ENCODE measurements at regions of chr12 and their contacts with region 1.

Region 1: DNA sequence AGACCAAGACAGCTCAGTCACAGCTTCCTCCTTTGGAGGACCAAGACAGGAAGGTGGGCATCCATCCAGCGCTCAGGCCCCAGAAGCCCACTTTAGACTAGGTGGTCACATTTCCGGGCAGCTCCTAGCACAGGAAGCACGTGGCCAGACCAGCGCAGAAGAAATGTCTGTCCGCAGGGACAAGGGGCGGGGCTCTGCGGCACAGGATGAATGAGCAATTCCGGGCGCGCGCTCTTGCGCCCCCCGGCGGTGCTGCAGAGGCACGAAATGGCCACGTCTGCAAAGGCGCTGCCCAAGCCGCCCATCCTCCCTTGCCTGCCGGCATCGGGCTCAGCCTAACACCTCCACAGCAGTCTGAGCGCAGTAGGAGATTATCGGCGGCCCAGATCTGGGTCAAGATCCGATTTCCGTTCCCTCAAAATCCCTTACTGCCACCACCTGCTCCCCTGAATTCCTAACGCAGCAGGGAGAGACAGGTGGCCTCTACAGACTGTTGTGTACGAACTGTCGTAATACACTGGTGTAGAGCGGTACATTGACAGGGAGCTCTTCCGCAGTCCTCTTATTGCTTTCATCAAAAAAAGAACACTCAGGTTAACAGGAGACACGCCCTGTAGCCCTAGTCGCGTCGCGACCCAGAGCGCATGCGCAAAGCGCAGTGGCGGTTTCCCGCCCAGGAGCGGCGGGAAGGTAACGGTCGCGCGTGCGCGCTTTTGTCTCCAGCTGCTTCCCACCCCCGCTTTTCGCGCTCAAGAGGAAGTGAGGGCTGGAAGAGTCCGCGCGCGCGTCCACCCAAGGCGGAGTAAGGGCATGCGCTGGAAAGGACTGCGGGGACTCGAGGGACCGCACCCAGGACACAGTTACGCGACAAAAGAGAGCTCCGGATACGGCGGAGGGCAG is 794 bp downstream of the TUBA1B start:
- DNase-seq: peak; percentile 98
- H3K4me3 ChIP-seq: peak overlapping the region; percentile 79 to 100 (median 99)
- H3K27ac ChIP-seq: peak overlapping the region; percentile 99 to 100 (median 100)
- H3K4me1 ChIP-seq: peaks cover 20 to 42% (median 38%) of the 10 kb centered on the region in 4 donors
- H3K27me3 ChIP-seq: no peaks in the 10 kb centered on the region
- CTCF ChIP-seq: peak; percentile 89 to 94 (median 92)
- EP300 ChIP-seq: no peak
- POLR2A ChIP-seq: peak; percentile 11

Region 2: GRCh38 chr12:49060237-49061156 is 69.9 kb before region 1 on chr12 and contains the start of gene KMT2D:
- intact Hi-C with region 1: loop called (anchors 5 kb)
- DNase-seq: peak; percentile 96
- H3K4me3 ChIP-seq: peak within 1 kb of the TSS; percentile 77 to 100 (median 98)
- H3K27ac ChIP-seq: peak within 1 kb of the TSS; percentile 96 to 98 (median 96)
- H3K4me1 ChIP-seq: peaks cover 34 to 58% (median 51%) of the 10 kb centered on the region in 4 donors
- H3K27me3 ChIP-seq: no peaks in the 10 kb centered on the region
- CTCF ChIP-seq: peak in 2 of 3 experiments; percentile 40 to 43
- EP300 ChIP-seq: no peak
- POLR2A ChIP-seq: peak; percentile 44
- total RNA-seq, gene KMT2D: 47.2 to 85.2 (median 76.2) TPM

Region 3: GRCh38 chr12:49188914-49189367 is 58.5 kb after region 1 on chr12 and contains the start of gene TUBA1A:
- intact Hi-C with region 1: loop called (anchors 2 kb)
- DNase-seq: peak; percentile 99
- H3K4me3 ChIP-seq: peak within 1 kb of the TSS; percentile 78 to 96 (median 91)
- H3K27ac ChIP-seq: peak within 1 kb of the TSS; percentile 95 to 100 (median 98)
- H3K4me1 ChIP-seq: peaks cover 16 to 42% (median 34%) of the 10 kb centered on the region in 4 donors
- H3K27me3 ChIP-seq: no peaks in the 10 kb centered on the region
- CTCF ChIP-seq: no peak
- EP300 ChIP-seq: no peak
- POLR2A ChIP-seq: peak; percentile 83
- total RNA-seq, gene TUBA1A: 534 to 1,110 (median 887) TPM

Region 4: DNA sequence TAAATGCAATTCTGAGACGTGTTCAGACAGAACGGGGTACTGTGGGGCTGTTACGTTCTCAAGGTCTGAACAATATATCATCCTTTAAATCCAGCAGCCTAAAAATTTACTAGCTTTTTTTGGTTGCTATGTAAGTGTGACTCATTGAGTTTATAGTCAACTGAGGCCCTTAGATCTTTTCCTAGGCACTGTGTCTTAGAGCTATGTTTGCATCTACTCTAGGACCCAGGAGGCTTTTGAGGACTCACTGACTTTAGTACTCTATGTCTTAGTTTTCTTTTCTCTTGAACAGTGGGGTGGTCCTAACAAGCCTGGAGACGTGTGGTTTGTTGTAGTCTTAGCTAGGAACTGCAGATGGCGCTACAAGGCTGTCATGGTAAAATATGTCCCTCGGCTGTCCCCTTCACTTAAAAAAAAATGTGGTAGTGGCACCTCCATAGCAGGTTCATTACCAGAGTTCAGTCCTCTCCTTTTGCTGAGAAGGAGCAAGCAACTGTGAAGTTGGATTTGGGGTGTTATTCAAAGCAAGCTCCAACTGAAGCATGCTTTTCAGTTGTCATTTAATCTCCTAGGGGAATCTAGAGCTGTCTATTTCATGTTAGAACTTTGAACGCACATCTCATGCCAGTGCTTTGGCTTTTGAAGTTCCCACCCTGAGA is 228.2 kb after region 1 on chr12:
- intact Hi-C with region 1: no loop called
- DNase-seq: peak; percentile 37
- H3K4me3 ChIP-seq: no peak overlapping the region
- H3K27ac ChIP-seq: no peak overlapping the region
- H3K4me1 ChIP-seq: peaks cover 0 to 7% (median 4%) of the 10 kb centered on the region in 4 donors
- H3K27me3 ChIP-seq: peaks cover 0 to 31% (median 2%) of the 10 kb centered on the region in 4 donors
- CTCF ChIP-seq: peak; percentile 71 to 83 (median 82)
- EP300 ChIP-seq: no peak
- POLR2A ChIP-seq: no peak